H1 (cell line): ENCODE measurements at regions of chr5 and their contacts with region 1.

Region 1: DNA sequence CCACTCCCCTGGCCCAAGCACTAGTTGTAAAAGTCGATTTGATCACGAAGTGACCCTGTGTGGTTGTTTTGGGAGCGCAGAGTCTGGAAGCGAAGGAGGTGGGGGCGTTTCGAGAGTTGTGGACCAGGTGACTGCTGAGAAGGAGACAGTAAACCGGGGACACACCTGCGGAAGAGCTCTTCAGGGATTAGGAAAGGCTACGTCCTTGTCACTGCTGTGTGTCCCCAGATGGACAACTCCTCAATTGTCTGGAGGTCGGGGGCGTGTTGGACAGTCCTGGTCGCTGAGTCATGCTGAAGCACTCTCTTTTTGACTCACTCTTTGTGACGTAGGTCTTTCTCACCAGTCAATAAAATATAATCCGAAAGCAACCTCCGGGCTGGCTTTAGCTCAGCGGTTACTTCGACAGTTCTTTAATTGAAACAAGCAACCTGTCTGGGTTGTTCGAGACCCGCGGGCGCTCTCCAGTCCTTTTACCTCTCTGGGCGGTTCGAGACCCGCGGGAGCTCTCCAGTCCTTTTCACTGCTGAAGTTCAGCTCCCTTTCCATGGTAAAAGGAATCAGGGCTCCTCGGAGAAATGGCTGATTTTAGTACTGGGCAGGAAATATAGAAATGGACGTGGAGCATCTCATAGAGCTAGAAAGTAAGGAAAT is 10.8 kb downstream of the ZMAT2 start:
- DNase-seq: peak; percentile 74 to 85
- H3K4me3 ChIP-seq: peak overlapping the region; percentile 63 to 78 (median 70)
- H3K27ac ChIP-seq: no peak overlapping the region
- H3K4me1 ChIP-seq: no peaks in the 10 kb centered on the region
- H3K27me3 ChIP-seq: no peaks in the 10 kb centered on the region
- CTCF ChIP-seq: no peak
- EP300 ChIP-seq: no peak
- POLR2A ChIP-seq: peak in 1 of 2 experiments; percentile 64; a peak in 2 of 3 replicates
- RAD21 ChIP-seq: no peak

Region 2: GRCh38 chr5:140391312-140391711 is 319.7 kb before region 1 on chr5:
- CTCF ChIA-PET with region 1: no interaction called
- POLR2A ChIA-PET with region 1: no interaction called
- DNase-seq: no peak
- H3K4me3 ChIP-seq: no peak overlapping the region
- H3K27ac ChIP-seq: no peak overlapping the region
- H3K4me1 ChIP-seq: no peaks in the 10 kb centered on the region
- H3K27me3 ChIP-seq: no peaks in the 10 kb centered on the region
- CTCF ChIP-seq: no peak
- EP300 ChIP-seq: no peak
- POLR2A ChIP-seq: no peak
- RAD21 ChIP-seq: no peak

Region 3: DNA sequence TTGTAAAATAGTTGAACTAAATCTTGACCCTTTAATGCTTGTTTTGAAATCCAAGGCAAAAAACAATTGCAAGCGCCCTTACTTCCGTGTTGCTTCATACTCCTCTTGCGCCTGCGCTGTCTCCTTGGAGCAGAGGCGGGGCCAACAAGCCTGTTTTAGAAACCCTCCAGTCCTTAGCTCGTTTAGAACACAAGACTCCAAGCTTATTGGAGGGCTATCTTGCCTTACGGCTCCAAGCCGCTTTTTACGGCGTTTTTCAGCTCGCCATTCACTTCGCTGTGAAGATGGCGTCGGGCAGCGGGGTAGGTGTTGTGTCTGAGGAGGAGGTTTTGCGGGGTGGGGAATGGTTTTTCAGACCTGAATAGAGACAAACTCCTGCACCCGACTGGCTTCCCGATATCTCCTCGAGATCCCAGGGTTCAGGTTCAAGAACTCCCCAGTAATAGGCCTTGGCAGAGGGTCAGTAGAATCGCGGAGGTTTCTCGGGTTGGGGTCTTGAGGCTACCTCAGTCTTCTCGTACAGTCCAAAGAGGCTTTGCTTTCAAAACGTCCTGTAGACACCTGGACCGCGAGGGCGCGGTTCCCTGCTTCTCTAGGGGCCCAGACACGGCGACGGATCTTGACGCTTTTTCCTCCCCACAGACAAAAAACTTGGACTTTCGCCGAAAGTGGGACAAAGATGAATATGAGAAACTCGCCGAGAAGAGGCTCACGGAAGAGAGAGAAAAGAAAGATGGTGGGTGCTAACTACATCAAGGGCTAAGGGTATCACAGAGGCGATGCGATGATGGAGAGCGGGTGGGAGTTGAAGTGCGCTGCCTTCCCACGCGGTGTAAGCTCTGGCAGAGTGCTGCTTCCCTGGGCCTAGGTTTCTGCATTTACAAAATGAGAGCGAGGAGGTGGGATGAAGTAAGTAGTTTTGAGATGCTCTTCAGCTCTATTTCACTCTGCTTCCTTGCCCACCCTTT is 10.6 kb before region 1 on chr5 and contains the start of gene ZMAT2:
- CTCF ChIA-PET with region 1: interaction called, 5 read pairs
- POLR2A ChIA-PET with region 1: interaction called, 16 read pairs
- DNase-seq: peak; percentile 86 to 87
- H3K4me3 ChIP-seq: peak within 1 kb of the TSS; percentile 92 to 98 (median 97)
- H3K27ac ChIP-seq: peak within 1 kb of the TSS; percentile 65
- H3K4me1 ChIP-seq: 0 out of 7 replicates have a peak, but pooled peaks cover 0 to 4% (median 0%) of the 10 kb centered on the region in 4 experiments
- H3K27me3 ChIP-seq: no peaks in the 10 kb centered on the region
- CTCF ChIP-seq: no peak
- EP300 ChIP-seq: no peak
- POLR2A ChIP-seq: peak; percentile 70 to 90
- RAD21 ChIP-seq: no peak
- total RNA-seq, gene ZMAT2: 56.8 and 58.8 TPM in 2 replicates

Region 4: GRCh38 chr5:140725799-140726471 is 14.9 kb after region 1 on chr5:
- CTCF ChIA-PET with region 1: interaction called, 5 read pairs
- POLR2A ChIA-PET with region 1: interaction called, 11 read pairs
- DNase-seq: peak; percentile 71 to 80
- H3K4me3 ChIP-seq: peak overlapping the region; percentile 26 to 74 (median 50)
- H3K27ac ChIP-seq: no peak overlapping the region
- H3K4me1 ChIP-seq: no peaks in the 10 kb centered on the region
- H3K27me3 ChIP-seq: no peaks in the 10 kb centered on the region
- CTCF ChIP-seq: no peak
- EP300 ChIP-seq: no peak
- POLR2A ChIP-seq: no peak
- RAD21 ChIP-seq: no peak

Region 5: DNA sequence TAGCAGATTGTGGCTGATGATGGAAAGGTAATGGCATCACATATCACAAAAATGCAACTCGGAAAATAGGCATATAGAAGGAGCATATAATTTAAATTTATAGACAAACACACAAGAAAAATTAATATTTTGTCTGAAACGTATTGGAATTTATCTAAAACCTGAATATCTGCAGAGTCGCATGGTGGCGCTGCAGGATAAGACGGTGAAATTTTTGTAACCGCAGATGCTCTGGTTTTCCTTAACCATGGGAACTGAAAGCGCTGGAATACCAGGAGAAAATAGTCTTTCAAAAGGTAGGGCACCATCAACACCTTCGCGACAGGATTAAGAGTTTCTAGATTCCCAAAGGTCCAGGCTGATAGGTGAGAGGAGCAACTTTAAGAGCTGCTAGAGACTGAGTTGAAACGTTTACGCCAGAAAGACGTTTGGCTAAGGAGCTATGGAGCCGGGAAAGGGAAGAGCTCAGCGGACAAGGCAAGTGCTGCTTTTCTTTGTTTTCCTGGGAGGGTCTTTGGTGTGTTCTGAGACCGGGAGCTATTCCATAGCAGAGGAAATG is 523.2 kb after region 1 on chr5:
- CTCF ChIA-PET with region 1: no interaction called
- POLR2A ChIA-PET with region 1: no interaction called
- DNase-seq: no peak
- H3K4me3 ChIP-seq: no peak overlapping the region
- H3K27ac ChIP-seq: no peak overlapping the region
- H3K4me1 ChIP-seq: no peaks in the 10 kb centered on the region
- H3K27me3 ChIP-seq: no peaks in the 10 kb centered on the region
- CTCF ChIP-seq: no peak
- EP300 ChIP-seq: no peak
- POLR2A ChIP-seq: no peak
- RAD21 ChIP-seq: peak; percentile 37 to 59